CD4-positive, alpha-beta T cell (primary cell): ENCODE measurements at regions of chr2 and their contacts with region 1.

Region 1: DNA sequence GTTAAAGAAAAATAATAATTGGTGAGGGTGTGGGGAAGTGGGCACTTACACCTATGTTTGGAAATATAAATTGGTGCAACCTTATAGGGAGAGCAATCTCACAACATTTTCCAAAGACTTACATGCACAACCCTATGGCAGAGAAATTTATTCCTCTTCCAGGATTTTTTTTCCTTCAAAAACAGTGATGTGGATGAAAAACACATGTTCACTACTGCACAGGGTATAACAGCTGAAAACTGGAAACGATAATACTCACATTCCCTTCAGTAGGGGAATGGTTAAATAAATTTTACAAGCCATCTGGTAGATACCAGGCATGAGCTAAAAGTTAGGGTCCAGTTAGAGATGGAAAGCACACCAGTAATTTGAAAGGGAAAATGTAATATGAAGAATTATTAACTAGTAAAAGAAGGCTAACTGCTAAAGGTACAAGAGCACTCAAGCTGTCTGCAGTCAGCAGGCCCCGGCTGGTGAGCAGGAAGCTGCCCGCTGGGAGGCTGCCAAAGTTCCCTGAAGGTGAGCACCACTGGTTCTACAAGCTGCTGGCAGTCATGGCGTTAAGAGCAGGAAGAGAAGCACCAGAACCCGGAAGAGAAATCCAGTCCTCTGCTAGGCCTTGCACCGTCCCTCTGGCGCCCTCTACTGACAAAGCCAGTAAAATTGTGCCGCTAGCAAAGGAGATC is 28.4 kb upstream of the CASP8 start:
- DNase-seq: peak; percentile 78 to 97 (median 88)
- ATAC-seq: peak; percentile 51
- H3K4me3 ChIP-seq: peak overlapping the region; percentile 4
- H3K4me3 Mint-ChIP-seq: peak overlapping the region; percentile 97
- H3K27ac ChIP-seq: no peak overlapping the region
- H3K27ac Mint-ChIP-seq: peak overlapping the region; percentile 95
- H3K4me1 ChIP-seq: peaks cover 36% of the 10 kb centered on the region
- H3K4me1 Mint-ChIP-seq: peaks cover 70% of the 10 kb centered on the region
- H3K27me3 ChIP-seq: no peaks in the 10 kb centered on the region
- H3K27me3 Mint-ChIP-seq: no peaks in the 10 kb centered on the region
- CTCF ChIP-seq: peak; percentile 85

Region 2: DNA sequence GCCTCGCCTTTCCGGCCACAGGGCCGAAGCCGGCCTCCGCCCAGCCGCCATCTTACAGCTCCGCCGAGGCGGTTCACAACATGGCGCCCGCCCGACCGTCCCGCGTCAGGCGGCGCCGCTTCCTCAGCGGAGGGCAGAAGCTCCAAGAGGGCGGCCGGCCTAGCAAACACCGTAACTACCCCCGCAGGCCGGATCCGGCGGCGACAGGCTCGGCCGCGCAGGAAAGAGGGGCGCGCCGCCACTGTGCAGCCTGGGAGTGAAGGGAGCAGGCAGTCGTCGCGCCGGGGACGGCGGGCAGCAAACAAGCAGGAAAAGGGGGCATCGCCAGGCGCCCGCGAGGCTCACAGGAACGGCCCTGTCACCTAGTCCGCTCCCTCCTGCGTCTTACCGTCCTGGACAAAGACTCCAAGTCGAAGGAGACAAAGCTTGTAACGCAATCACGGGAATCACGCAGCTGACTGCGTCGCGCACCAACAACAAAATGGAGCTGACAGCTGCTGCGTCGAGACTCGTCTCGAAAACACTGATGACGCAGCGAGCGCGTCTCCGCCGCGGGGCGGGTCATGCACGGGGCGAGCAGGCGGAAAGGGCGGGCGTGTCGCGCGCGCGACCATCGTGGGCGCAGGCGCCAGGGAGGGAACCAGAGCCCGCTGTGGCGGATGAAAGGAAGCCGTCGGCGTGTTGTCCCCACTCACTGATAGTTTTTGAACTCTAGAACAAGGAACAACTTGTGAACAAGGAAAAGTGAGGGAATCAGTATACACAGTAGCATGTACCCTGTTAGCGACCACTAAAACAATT is 367.5 kb before region 1 on chr2 and contains the start of gene CLK1:
- CTCF ChIA-PET with region 1: interaction called, 4 read pairs
- POLR2A ChIA-PET with region 1: interaction called, 26 read pairs
- intact Hi-C with region 1: no loop called
- DNase-seq: peak; percentile 95 to 98 (median 97)
- ATAC-seq: peak; percentile 75
- H3K4me3 ChIP-seq: peak within 1 kb of the TSS; percentile 96
- H3K4me3 Mint-ChIP-seq: peak within 1 kb of the TSS; percentile 97
- H3K27ac ChIP-seq: peak within 1 kb of the TSS; percentile 100
- H3K27ac Mint-ChIP-seq: peak within 1 kb of the TSS; percentile 88
- H3K4me1 ChIP-seq: peaks cover 26% of the 10 kb centered on the region
- H3K4me1 Mint-ChIP-seq: peaks cover 48% of the 10 kb centered on the region
- H3K27me3 ChIP-seq: no peaks in the 10 kb centered on the region
- H3K27me3 Mint-ChIP-seq: peaks cover 4% of the 10 kb centered on the region
- CTCF ChIP-seq: no peak
- total RNA-seq, gene CLK1: 1,228 to 1,235 TPM

Region 3: GRCh38 chr2:201118121-201118960 is 113.6 kb before region 1 on chr2:
- CTCF ChIA-PET with region 1: interaction called, 15 read pairs
- POLR2A ChIA-PET with region 1: interaction called, 47 read pairs
- intact Hi-C with region 1: loop called (anchors 2 to 5 kb)
- DNase-seq: peak; percentile 80 to 93 (median 86)
- ATAC-seq: peak; percentile 46
- H3K4me3 ChIP-seq: peak overlapping the region; percentile 84
- H3K4me3 Mint-ChIP-seq: peak overlapping the region; percentile 88
- H3K27ac ChIP-seq: peak overlapping the region; percentile 78 to 98
- H3K27ac Mint-ChIP-seq: peak overlapping the region; percentile 93
- H3K4me1 ChIP-seq: peaks cover 40% of the 10 kb centered on the region
- H3K4me1 Mint-ChIP-seq: peaks cover 67% of the 10 kb centered on the region
- H3K27me3 ChIP-seq: no peaks in the 10 kb centered on the region
- H3K27me3 Mint-ChIP-seq: no peaks in the 10 kb centered on the region
- CTCF ChIP-seq: peak; percentile 67

Region 4: DNA sequence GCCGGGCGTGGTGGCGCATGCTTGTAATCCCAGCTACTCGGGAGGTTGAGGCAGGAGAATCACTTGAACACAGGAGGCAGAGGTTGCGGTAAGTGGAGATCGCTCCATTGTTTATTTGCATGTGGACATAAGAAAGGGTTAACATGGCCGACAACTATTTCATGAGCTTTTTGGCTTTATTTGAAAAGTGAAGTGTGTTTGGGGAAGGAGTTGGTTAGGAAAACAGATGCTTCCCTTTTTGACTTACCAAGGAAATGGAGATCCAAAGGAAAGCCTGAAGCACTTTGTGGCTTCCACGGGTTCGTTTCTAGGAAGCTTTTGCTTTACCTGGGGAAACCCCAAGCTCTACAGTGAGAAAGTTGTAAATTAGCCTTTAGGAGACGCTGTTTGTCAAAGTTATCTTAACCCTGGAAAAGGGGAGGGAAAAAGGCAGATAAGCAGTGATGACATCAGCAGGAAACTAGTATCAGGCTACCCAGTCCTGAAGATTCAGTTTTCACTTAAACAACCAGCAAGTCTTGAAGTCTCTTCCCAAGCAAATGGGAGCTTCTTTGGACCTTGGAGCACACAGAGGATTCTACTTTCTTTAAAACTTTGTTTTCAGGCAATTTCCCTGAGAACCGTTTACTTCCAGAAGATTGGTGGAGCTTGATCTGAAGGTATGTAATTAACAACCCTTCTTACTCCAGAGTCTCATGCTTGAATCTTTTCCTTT is 49.1 kb before region 1 on chr2 and contains the start of gene CASP10:
- CTCF ChIA-PET with region 1: interaction called, 105 read pairs
- POLR2A ChIA-PET with region 1: interaction called, 120 read pairs
- intact Hi-C with region 1: loop called (anchors 1 kb)
- DNase-seq: peak in 4 of 14 experiments; percentile 39 to 89 (median 88)
- ATAC-seq: peak; percentile 89
- H3K4me3 ChIP-seq: peak within 1 kb of the TSS; percentile 77
- H3K4me3 Mint-ChIP-seq: peak within 1 kb of the TSS; percentile 96
- H3K27ac ChIP-seq: peak within 1 kb of the TSS; percentile 62 to 69
- H3K27ac Mint-ChIP-seq: peak within 1 kb of the TSS; percentile 91
- H3K4me1 ChIP-seq: peaks cover 38% of the 10 kb centered on the region
- H3K4me1 Mint-ChIP-seq: peaks cover 45% of the 10 kb centered on the region
- H3K27me3 ChIP-seq: no peaks in the 10 kb centered on the region
- H3K27me3 Mint-ChIP-seq: no peaks in the 10 kb centered on the region
- CTCF ChIP-seq: peak; percentile 64
- total RNA-seq, gene CASP10: 12.6 to 13.7 TPM

Region 5: DNA sequence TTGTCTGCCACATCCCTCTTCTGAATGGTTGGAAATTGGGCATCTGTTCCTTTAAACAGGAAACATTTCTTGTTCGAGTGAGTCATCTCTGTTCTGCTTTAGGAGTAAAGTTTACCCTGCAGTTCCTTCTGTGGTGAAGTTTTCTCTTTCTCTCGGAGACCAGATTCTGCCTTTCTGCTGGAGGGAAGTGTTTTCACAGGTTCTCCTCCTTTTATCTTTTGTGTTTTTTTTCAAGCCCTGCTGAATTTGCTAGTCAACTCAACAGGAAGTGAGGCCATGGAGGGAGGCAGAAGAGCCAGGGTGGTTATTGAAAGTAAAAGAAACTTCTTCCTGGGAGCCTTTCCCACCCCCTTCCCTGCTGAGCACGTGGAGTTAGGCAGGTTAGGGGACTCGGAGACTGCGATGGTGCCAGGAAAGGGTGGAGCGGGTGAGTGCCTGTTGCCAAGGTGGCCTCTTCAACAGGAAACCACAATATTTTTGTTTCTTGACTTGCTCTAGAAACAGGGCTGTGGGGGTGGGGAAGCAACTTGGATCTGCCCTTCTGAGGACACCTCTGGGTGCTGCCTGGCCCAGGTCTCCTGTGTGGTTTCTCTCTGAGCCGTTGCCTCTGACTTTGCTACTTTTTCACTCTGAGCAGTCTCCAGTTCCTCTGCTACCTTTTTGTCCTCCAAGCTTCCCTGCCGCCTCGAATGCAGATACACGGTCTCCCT is 26.2 kb after region 1 on chr2:
- CTCF ChIA-PET with region 1: interaction called, 86 read pairs
- POLR2A ChIA-PET with region 1: interaction called, 78 read pairs
- intact Hi-C with region 1: loop called (anchors 1 kb)
- DNase-seq: peak; percentile 90 to 99 (median 95)
- ATAC-seq: peak; percentile 71
- H3K4me3 ChIP-seq: peak overlapping the region; percentile 62
- H3K4me3 Mint-ChIP-seq: peak overlapping the region; percentile 89
- H3K27ac ChIP-seq: peak overlapping the region; percentile 93 to 100
- H3K27ac Mint-ChIP-seq: peak overlapping the region; percentile 97
- H3K4me1 ChIP-seq: peaks cover 74% of the 10 kb centered on the region
- H3K4me1 Mint-ChIP-seq: peaks cover 75% of the 10 kb centered on the region
- H3K27me3 ChIP-seq: no peaks in the 10 kb centered on the region
- H3K27me3 Mint-ChIP-seq: no peaks in the 10 kb centered on the region
- CTCF ChIP-seq: no peak

Region 6: GRCh38 chr2:201451292-201452057 is 219.6 kb after region 1 on chr2 and contains the starts of genes STRADB and TRAK2:
- CTCF ChIA-PET with region 1: interaction called, 7 read pairs
- POLR2A ChIA-PET with region 1: interaction called, 30 read pairs
- intact Hi-C with region 1: loop called (anchors 5 kb)
- DNase-seq: peak; percentile 87 to 98 (median 92)
- ATAC-seq: peak; percentile 84
- H3K4me3 ChIP-seq: peak within 1 kb of the TSS; percentile 90
- H3K4me3 Mint-ChIP-seq: peak within 1 kb of the TSS; percentile 97
- H3K27ac ChIP-seq: peak within 1 kb of the TSS; percentile 83 to 85
- H3K27ac Mint-ChIP-seq: peak within 1 kb of the TSS; percentile 98
- H3K4me1 ChIP-seq: peaks cover 44% of the 10 kb centered on the region
- H3K4me1 Mint-ChIP-seq: peaks cover 61% of the 10 kb centered on the region
- H3K27me3 ChIP-seq: no peaks in the 10 kb centered on the region
- H3K27me3 Mint-ChIP-seq: no peaks in the 10 kb centered on the region
- CTCF ChIP-seq: no peak
- total RNA-seq, gene STRADB: 4.2 to 5.6 TPM
- total RNA-seq, gene TRAK2: 32.5 to 35.6 TPM

Region 7: GRCh38 chr2:202178342-202178958 is 946.5 kb after region 1 on chr2:
- CTCF ChIA-PET with region 1: no interaction called
- POLR2A ChIA-PET with region 1: no interaction called
- intact Hi-C with region 1: loop called in 1 of 2 experiments (anchors 5 kb)
- DNase-seq: peak in 13 of 14 experiments; percentile 10 to 73 (median 35)
- ATAC-seq: no peak
- H3K4me3 ChIP-seq: no peak overlapping the region
- H3K4me3 Mint-ChIP-seq: no peak overlapping the region
- H3K27ac ChIP-seq: no peak overlapping the region
- H3K27ac Mint-ChIP-seq: no peak overlapping the region
- H3K4me1 ChIP-seq: no peaks in the 10 kb centered on the region
- H3K4me1 Mint-ChIP-seq: no peaks in the 10 kb centered on the region
- H3K27me3 ChIP-seq: no peaks in the 10 kb centered on the region
- H3K27me3 Mint-ChIP-seq: peaks cover 8% of the 10 kb centered on the region
- CTCF ChIP-seq: peak; percentile 87

Region 8: GRCh38 chr2:202634556-202635427 is 1402.9 kb after region 1 on chr2 and contains the start of gene FAM117B:
- CTCF ChIA-PET with region 1: no interaction called
- POLR2A ChIA-PET with region 1: no interaction called
- intact Hi-C with region 1: no loop called
- DNase-seq: peak; percentile 97 to 99 (median 98)
- ATAC-seq: peak; percentile 87
- H3K4me3 ChIP-seq: peak within 1 kb of the TSS; percentile 86
- H3K4me3 Mint-ChIP-seq: peak within 1 kb of the TSS; percentile 95
- H3K27ac ChIP-seq: peak within 1 kb of the TSS; percentile 89 to 96
- H3K27ac Mint-ChIP-seq: peak within 1 kb of the TSS; percentile 98
- H3K4me1 ChIP-seq: peaks cover 34% of the 10 kb centered on the region
- H3K4me1 Mint-ChIP-seq: peaks cover 56% of the 10 kb centered on the region
- H3K27me3 ChIP-seq: no peaks in the 10 kb centered on the region
- H3K27me3 Mint-ChIP-seq: no peaks in the 10 kb centered on the region
- CTCF ChIP-seq: no peak
- total RNA-seq, gene FAM117B: 46.8 to 50.4 TPM